Aorta (tissue), 5 donors: ENCODE measurements at regions of chr4 and their contacts with region 1.

Region 1: DNA sequence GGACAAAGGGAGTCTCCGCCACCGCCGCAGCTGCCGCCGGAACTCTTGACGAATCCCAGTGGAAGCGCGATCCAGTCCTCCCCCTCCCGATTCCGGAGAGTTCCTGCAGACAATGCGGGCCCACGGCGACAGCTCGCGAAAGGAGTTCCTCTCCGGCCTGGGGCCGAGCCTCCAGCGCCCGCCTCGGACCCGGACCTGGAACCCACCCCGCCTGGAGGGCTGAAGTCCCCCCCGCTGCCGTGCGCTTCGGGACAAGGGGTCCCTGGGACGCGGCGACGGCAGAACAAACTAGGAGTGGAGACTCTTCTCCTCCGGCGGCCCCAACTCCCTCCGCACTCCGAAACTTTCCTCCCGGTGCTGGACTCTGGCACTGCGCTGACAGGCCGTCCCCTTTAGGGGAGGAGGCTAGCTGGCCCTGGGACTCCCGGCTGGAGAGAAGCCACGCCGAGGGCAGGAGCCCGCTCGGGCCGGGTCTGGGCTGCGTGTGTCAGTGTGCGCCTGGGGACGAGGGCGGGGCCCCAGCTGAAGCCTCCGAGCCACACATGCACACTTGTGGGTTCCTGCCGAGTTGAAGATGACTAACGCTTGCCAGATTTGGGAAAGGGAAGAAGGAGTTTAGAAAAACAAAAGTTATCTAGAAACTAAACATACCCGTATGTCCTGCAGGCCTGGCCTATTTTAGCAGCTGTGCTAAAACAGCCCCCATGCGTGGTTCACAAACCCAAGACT is at the start of gene ANTXR2:
- DNase-seq: peak; percentile 96
- ATAC-seq: peak; percentile 96
- H3K4me3 ChIP-seq: peak within 1 kb of the TSS; percentile 69 to 83
- H3K27ac ChIP-seq: peak within 1 kb of the TSS in 1 of 2 donors; percentile 76
- H3K4me1 ChIP-seq: no peaks in the 10 kb centered on the region
- H3K27me3 ChIP-seq: no peaks in the 10 kb centered on the region
- total RNA-seq, gene ANTXR2: 82.6 to 88.0 TPM

Region 2: DNA sequence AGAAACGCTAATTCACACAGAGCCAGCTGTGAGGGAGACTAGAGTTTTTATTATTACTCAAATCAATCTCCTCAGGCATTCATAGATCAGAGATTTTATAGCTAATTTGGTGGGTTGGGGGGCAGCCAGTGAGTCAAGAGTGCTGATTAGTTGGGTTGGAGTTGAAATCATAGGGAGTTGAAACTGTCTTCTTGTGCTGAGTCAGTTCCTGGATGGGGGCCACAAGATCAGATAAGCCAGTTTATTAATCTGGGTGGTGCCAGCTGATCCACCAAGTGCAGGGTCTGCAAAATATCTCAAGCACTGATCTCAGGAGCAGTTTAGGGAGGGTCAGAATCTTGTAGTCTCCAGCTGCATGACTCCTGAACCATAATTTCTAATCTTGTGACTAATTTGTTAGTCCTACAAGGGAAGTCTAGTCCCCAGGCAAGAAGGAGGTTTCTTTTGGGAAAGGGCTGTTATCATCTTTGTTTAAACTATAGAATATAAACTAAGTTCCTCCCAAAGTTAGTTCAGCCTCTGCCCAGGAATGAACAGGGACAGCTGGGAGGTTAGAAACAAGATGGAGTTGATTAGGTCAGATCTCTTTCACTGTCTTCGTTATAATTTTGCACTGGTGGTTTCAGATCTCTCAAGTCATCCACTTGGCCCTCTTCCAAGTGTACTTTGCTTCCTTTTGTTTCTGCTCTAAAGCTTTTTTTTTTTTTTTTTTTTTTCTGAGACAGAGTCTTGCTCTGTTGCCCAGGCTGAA is 741.6 kb before region 1 on chr4:
- intact Hi-C with region 1: no loop called
- DNase-seq: no peak
- ATAC-seq: no peak
- H3K4me3 ChIP-seq: no peak overlapping the region
- H3K27ac ChIP-seq: no peak overlapping the region
- H3K4me1 ChIP-seq: no peaks in the 10 kb centered on the region
- H3K27me3 ChIP-seq: no peaks in the 10 kb centered on the region

Region 3: DNA sequence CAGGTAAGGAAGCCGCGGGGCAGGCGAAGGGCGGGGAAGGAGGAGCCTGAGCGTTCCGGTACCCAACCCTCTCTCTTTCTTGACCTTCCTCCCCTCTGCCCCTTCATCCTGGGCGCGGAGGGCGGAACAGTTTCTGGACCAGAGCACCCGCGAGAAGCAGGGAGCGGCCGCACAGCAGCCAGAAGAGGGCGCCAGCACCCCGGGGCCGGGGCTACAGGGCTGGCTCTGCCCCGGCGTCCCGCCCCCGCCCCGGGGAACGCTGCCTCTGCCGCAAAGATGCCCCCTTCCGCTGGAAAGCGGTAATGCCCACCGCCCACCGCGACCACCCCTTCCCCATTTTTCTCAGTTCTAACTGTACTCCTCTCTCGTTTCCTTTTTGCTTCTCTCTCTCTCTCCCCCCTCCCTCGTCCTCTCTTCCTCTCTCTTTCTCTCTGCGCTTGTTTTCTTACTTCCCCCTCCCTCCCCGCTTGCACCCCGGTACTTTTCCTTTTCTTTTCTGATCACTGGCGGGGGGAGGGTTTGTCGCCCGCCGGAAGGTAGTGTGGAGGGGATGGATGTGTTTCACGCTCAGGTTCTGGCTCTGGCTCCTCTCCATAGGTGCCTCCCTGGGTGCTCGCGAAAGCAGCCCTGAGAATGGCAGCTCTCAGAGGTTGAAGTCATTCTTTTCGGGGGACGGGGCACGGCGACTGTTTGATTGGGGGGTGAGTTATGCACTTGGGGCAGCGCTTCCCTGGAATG is 111.3 kb after region 1 on chr4:
- intact Hi-C with region 1: loop called (anchors 2 to 5 kb)
- DNase-seq: peak; percentile 93 to 98
- ATAC-seq: peak; percentile 96
- H3K4me3 ChIP-seq: peak overlapping the region; percentile 45 to 71
- H3K27ac ChIP-seq: no peak overlapping the region
- H3K4me1 ChIP-seq: no peaks in the 10 kb centered on the region
- H3K27me3 ChIP-seq: no peaks in the 10 kb centered on the region